ENCODE measurements at regions of chr2 and their contacts with region 1.

Region 1: DNA sequence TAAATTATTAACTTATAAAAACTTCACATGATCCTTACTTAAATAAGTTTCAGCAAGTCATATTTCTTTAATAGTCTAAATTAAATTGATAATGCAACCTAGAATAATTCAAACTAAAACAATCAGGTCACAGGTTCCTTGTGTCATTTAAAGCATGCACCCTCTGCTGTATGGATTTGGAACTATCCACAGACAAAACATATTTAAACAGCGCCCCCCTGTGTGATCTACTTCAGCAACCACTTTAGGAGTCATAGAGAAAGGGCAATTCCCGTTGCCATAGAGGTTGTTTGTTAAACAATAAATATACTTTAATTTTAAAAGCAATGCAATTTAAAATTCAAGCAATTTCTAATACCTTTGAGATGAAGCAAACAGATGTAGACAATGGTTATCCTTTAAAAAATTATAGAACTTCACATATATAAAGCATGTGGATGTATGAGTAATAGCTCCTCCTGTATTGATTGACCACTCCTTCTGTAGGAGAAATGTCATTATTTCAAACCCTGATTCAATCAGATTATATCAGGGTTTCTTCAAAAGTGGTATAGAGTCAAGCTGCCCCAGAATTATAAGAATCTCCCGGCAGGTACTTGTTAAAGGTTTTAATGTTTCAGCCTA is 21.2 kb downstream of the GRB14 start:
- DNase-seq: peak; percentile 70
- H3K4me3 ChIP-seq: no peak overlapping the region
- H3K27ac ChIP-seq: peak overlapping the region; percentile 59
- H3K4me1 ChIP-seq: no peaks in the 10 kb centered on the region
- H3K27me3 ChIP-seq: no peaks in the 10 kb centered on the region
- CTCF ChIP-seq: peak; percentile 95 to 96

Region 2: GRCh38 chr2:163171786-163172531 is 1428.1 kb before region 1 on chr2:
- CTCF ChIA-PET with region 1: no interaction called
- dilution Hi-C with region 1: no loop called
- in situ Hi-C with region 1: no loop called
- intact Hi-C with region 1: loop called (anchors 5 kb)
- DNase-seq: peak; percentile 48
- H3K4me3 ChIP-seq: no peak overlapping the region
- H3K27ac ChIP-seq: no peak overlapping the region
- H3K4me1 ChIP-seq: no peaks in the 10 kb centered on the region
- H3K27me3 ChIP-seq: no peaks in the 10 kb centered on the region
- CTCF ChIP-seq: no peak

Region 3: GRCh38 chr2:164620873-164621626 is 21.0 kb after region 1 on chr2 and contains the start of gene GRB14:
- CTCF ChIA-PET with region 1: no interaction called
- dilution Hi-C with region 1: no loop called
- in situ Hi-C with region 1: no loop called
- intact Hi-C with region 1: no loop called
- DNase-seq: peak; percentile 84
- H3K4me3 ChIP-seq: peak within 1 kb of the TSS; percentile 71 to 87 (median 78)
- H3K27ac ChIP-seq: peak within 1 kb of the TSS; percentile 65
- H3K4me1 ChIP-seq: peaks cover 23% of the 10 kb centered on the region
- H3K27me3 ChIP-seq: no peaks in the 10 kb centered on the region
- CTCF ChIP-seq: peak in 1 of 2 donors; percentile 30
- total RNA-seq, gene GRB14: 7.3 to 9.8 TPM

Measured in mammary epithelial cell (primary cell).